ENCODE measurements at regions of chr3 and their contacts with region 1.

Region 1: GRCh38 chr3:56980798-56981390 is 79.6 kb upstream of the SPATA12 start:
- DNase-seq: no peak
- H3K4me3 ChIP-seq: no peak overlapping the region
- H3K27ac ChIP-seq: no peak overlapping the region
- H3K4me1 ChIP-seq: peaks cover 47% of the 10 kb centered on the region
- H3K27me3 ChIP-seq: no peaks in the 10 kb centered on the region
- CTCF ChIP-seq: no peak
- POLR2A ChIP-seq: no peak

Region 2: DNA sequence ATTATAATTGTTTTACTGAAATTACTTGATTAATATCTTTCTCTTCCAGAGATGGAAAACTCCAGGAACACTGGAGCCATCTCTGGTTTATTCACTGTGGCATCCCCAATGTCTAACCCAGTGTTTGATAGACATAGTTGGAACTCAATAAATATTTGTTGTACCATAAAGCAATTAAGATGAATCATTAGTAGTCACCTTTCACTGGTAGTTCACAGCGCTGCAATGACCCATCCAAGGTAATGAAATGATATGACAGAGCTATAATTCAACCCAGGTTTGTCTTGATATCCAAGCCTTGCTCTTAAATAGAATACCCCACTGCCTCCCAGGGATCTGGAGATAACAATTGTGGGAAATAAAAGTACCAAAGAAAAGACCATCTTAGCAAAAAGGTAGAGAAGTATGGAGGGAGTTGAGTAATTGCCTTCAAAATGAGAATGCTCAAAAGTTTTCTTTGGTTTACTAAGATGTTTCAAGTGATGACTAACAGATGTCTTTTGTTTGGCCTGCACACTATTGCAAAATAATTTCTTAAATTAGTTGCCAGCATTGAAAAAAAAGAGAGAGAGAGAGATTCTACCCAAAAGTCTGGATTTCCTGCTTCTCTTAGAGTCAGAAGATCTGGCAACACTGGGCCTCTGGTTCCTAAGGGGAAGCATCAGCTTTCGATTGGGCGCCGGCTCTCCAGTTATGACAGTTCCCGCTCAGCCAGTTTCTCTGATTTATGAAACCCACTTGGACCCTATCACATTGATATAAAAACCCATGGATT is 861.1 kb before region 1 on chr3:
- intact Hi-C with region 1: loop called (anchors 5 kb)
- DNase-seq: no peak
- H3K4me3 ChIP-seq: no peak overlapping the region
- H3K27ac ChIP-seq: no peak overlapping the region
- H3K4me1 ChIP-seq: peaks cover 20% of the 10 kb centered on the region
- H3K27me3 ChIP-seq: no peaks in the 10 kb centered on the region
- CTCF ChIP-seq: no peak
- POLR2A ChIP-seq: no peak